ENCODE measurements at regions of chr19 and their contacts with region 1.

Region 1: DNA sequence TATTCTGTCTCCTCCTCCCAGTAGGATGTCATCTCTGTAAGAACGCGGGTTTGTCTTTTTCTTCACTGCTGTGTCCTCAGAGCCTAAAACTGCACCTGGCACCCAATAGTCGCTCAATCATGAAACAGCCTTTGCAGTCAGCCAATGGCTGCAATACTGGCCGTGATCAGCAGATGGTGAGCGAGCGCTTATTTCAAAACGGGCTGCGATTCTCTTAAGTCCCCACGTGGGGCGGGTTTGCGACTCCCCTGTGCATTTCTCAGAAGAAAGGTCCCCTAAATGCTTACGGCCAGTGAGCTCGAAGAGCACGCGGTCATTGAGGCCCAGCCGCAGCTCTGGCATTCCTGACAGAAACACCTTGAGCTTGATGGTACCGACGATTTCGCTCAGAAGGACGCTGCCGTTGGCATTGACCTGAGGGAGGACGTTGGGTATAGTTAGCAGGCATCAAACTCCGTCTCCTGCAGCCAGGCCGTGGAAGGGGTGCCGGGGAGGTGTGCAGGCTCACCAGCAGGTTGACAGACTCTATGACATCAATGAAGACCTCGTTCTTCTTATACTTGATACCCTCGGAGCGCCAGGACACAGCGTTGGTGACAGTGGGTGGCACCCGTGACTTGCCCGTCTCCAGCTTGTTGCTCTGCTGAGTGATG is 6.0 kb downstream of the AP1M2 start:
- DNase-seq: peak; percentile 85 to 97 (median 95)
- H3K4me3 ChIP-seq: no peak overlapping the region
- H3K27ac ChIP-seq: no peak overlapping the region
- H3K4me1 ChIP-seq: peaks cover 0 to 4% of the 10 kb centered on the region in 2 donors
- H3K27me3 ChIP-seq: no peaks in the 10 kb centered on the region
- CTCF ChIP-seq: peak; percentile 96 to 100 (median 98)
- POLR2A ChIP-seq: no peak

Region 2: DNA sequence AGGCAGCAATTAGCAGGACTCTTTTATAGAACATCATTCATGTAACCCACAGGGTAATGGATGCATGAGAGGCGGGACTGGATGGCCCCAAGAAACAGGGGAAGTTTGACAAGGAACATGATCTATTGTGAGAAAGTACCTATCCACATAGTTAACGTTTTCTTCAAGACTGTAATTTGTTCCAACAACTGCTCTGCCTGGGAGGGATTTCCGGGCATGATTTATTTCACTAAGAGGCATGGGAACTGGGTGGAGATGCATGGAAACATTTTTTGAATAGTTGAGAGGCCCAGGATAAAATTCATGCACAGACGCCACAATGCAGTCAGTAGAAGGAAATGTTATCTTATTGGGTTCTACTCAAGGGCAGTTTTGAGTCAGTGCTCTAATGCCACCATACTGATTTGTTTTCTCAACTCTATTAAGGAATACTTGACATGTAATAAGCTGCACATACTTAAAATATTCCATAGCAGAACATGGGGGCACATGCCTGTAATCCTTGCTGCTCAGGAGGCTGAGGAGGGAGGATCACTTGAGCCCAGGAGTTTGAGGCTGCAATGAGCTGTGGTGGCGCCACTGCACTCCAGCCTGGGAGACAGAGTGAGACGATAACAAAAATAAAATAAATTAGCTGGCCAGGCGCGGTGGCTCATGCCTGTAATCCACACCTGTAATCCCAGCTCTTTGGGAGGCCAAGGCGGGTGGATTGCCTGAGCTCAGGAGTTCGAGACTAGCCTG is 47.3 kb before region 1 on chr19:
- intact Hi-C with region 1: no loop called
- DNase-seq: peak in 1 of 7 donors; percentile 41
- H3K4me3 ChIP-seq: no peak overlapping the region
- H3K27ac ChIP-seq: peak overlapping the region in 2 of 5 donors; percentile 18 to 75
- H3K4me1 ChIP-seq: no peaks in the 10 kb centered on the region
- H3K27me3 ChIP-seq: no peaks in the 10 kb centered on the region
- CTCF ChIP-seq: no peak
- POLR2A ChIP-seq: no peak

Region 3: DNA sequence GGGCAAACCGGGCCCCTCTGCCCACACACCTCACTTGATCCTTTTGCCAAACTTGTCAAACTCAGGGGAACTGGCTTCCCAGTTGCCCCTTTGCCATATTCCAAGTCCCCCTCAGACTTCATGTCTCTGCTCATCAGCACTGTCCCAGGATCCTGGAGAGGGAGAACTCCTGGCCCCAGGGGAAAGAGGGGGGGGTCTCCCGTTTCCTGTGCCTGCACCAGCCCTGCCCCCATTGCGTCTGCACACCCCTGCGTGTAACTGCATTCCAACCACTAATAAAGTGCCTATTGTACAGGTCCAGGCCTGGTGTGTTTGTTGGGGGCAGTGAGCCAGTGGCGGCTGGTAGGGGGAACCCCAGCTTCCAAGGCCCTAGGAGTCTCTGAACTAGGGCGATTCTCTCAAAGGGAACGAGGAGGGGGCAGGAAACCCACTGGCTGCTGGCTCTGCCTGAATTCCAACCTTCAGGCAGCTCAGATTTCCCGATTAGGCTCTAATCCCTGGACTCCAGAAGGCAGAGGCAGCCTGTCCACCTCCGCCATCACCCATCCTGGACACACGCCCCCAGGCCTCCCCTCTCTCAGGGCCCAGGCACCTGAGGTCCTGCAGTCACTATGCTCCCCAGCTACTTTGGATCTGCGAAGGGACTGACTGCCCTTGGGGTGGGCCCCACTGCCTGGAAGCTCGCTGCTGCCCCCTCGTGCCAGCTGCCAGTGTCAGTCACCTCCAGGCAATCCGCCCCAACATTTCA is 63.3 kb after region 1 on chr19:
- intact Hi-C with region 1: loop called (anchors 2 to 5 kb)
- DNase-seq: peak; percentile 79 to 91 (median 88)
- H3K4me3 ChIP-seq: no peak overlapping the region
- H3K27ac ChIP-seq: peak overlapping the region in 1 of 5 donors; percentile 31
- H3K4me1 ChIP-seq: peaks cover 0 to 6% of the 10 kb centered on the region in 2 donors
- H3K27me3 ChIP-seq: no peaks in the 10 kb centered on the region
- CTCF ChIP-seq: peak; percentile 62 to 98 (median 95)
- POLR2A ChIP-seq: no peak

Region 4: DNA sequence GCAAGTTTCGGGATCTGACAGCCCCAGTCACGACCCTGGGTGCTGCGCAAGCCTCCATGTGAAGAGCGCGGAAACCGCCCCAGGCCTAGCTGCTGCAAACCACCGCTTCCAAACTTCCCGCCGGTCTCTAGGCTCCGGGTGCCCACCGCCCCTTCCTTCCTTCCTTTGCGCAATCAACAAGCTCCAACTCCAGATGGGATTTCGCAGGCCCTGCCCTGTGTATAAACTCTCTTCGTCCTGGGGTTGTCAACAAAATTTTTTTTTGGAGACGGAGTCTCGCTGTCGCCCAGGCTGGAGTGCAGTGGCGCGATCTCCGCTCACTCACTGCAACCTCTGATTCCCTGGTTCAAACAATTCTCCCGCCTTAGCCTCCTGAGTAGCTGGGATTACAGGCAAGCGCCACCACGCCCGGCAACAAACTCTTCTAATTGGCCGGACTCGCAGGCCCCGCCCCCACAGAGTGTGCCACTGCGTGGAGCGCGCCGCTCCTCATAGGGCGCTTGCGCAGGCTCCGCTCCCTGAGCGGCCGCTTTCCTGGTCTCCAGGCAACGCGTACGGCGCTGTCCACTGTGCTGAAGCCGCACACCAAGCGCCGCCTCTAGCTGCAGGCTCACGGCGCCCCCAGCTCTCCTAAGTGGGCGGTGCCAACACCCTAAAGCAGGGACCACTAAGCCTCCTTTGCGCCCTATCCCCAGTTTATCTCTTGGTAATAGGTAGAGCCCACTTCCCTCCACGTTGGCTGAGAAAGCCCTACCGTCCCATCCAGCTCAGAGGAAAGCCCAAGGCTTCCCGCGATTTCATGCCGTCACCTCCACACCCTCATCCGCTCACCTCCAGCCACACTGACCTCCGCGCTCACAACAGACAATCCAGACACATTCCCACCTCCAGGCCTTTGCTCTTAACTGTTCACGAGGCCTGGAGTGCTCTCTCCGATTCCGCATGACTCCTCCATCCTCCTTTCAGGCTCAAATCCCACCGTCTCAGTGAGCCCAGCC is 114.6 kb after region 1 on chr19:
- intact Hi-C with region 1: loop called (anchors 5 to 10 kb)
- DNase-seq: peak; percentile 95 to 99 (median 96)
- H3K4me3 ChIP-seq: peak overlapping the region in 1 of 4 donors; percentile 13
- H3K27ac ChIP-seq: no peak overlapping the region
- H3K4me1 ChIP-seq: peaks cover 0 to 10% of the 10 kb centered on the region in 2 donors
- H3K27me3 ChIP-seq: no peaks in the 10 kb centered on the region
- CTCF ChIP-seq: no peak
- POLR2A ChIP-seq: no peak

Measured in adrenal gland (tissue), 19 donors.